ENCODE measurements at regions of chr12 and their contacts with region 1.

Region 1: GRCh38 chr12:47742253-47742825 is 16.3 kb downstream of the RAPGEF3 start:
- DNase-seq: peak; percentile 45 to 83 (median 72)
- ATAC-seq: peak; percentile 57
- H3K4me3 ChIP-seq: no peak overlapping the region
- H3K4me3 Mint-ChIP-seq: no peak overlapping the region
- H3K27ac ChIP-seq: no peak overlapping the region
- H3K27ac Mint-ChIP-seq: no peak overlapping the region
- H3K4me1 ChIP-seq: peaks cover 27% of the 10 kb centered on the region
- H3K4me1 Mint-ChIP-seq: peaks cover 32% of the 10 kb centered on the region
- H3K27me3 ChIP-seq: peaks cover 0 to 4% of the 10 kb centered on the region in 2 experiments
- H3K27me3 Mint-ChIP-seq: peaks cover 5% of the 10 kb centered on the region
- CTCF ChIP-seq: peak; percentile 98

Region 2: GRCh38 chr12:47715393-47715876 is 26.9 kb before region 1 on chr12:
- CTCF ChIA-PET with region 1: interaction called, 172 read pairs
- POLR2A ChIA-PET with region 1: no interaction called
- intact Hi-C with region 1: loop called (anchors 1 to 2 kb)
- DNase-seq: peak; percentile 56 to 88 (median 85)
- ATAC-seq: peak; percentile 85
- H3K4me3 ChIP-seq: no peak overlapping the region
- H3K4me3 Mint-ChIP-seq: no peak overlapping the region
- H3K27ac ChIP-seq: no peak overlapping the region
- H3K27ac Mint-ChIP-seq: no peak overlapping the region
- H3K4me1 ChIP-seq: peaks cover 17% of the 10 kb centered on the region
- H3K4me1 Mint-ChIP-seq: peaks cover 27% of the 10 kb centered on the region
- H3K27me3 ChIP-seq: no peaks in the 10 kb centered on the region
- H3K27me3 Mint-ChIP-seq: no peaks in the 10 kb centered on the region
- CTCF ChIP-seq: peak; percentile 67

Region 3: GRCh38 chr12:47767216-47767724 is 24.9 kb after region 1 on chr12:
- CTCF ChIA-PET with region 1: interaction called, 500 read pairs
- POLR2A ChIA-PET with region 1: interaction called, 16 read pairs
- intact Hi-C with region 1: loop called (anchors 1 to 2 kb)
- DNase-seq: peak; percentile 46 to 83 (median 73)
- ATAC-seq: peak; percentile 76
- H3K4me3 ChIP-seq: no peak overlapping the region
- H3K4me3 Mint-ChIP-seq: no peak overlapping the region
- H3K27ac ChIP-seq: no peak overlapping the region
- H3K27ac Mint-ChIP-seq: no peak overlapping the region
- H3K4me1 ChIP-seq: peaks cover 28% of the 10 kb centered on the region
- H3K4me1 Mint-ChIP-seq: peaks cover 23% of the 10 kb centered on the region
- H3K27me3 ChIP-seq: no peaks in the 10 kb centered on the region
- H3K27me3 Mint-ChIP-seq: no peaks in the 10 kb centered on the region
- CTCF ChIP-seq: peak; percentile 58

Region 4: GRCh38 chr12:47797441-47797840 is 55.1 kb after region 1 on chr12:
- CTCF ChIA-PET with region 1: interaction called, 15 read pairs
- POLR2A ChIA-PET with region 1: no interaction called
- intact Hi-C with region 1: no loop called
- DNase-seq: peak in 6 of 9 experiments; percentile 47 to 73 (median 64)
- ATAC-seq: peak; percentile 90
- H3K4me3 ChIP-seq: no peak overlapping the region
- H3K4me3 Mint-ChIP-seq: no peak overlapping the region
- H3K27ac ChIP-seq: no peak overlapping the region
- H3K27ac Mint-ChIP-seq: peak overlapping the region; percentile 85
- H3K4me1 ChIP-seq: peaks cover 44% of the 10 kb centered on the region
- H3K4me1 Mint-ChIP-seq: peaks cover 36% of the 10 kb centered on the region
- H3K27me3 ChIP-seq: no peaks in the 10 kb centered on the region
- H3K27me3 Mint-ChIP-seq: no peaks in the 10 kb centered on the region
- CTCF ChIP-seq: peak; percentile 35

Region 5: DNA sequence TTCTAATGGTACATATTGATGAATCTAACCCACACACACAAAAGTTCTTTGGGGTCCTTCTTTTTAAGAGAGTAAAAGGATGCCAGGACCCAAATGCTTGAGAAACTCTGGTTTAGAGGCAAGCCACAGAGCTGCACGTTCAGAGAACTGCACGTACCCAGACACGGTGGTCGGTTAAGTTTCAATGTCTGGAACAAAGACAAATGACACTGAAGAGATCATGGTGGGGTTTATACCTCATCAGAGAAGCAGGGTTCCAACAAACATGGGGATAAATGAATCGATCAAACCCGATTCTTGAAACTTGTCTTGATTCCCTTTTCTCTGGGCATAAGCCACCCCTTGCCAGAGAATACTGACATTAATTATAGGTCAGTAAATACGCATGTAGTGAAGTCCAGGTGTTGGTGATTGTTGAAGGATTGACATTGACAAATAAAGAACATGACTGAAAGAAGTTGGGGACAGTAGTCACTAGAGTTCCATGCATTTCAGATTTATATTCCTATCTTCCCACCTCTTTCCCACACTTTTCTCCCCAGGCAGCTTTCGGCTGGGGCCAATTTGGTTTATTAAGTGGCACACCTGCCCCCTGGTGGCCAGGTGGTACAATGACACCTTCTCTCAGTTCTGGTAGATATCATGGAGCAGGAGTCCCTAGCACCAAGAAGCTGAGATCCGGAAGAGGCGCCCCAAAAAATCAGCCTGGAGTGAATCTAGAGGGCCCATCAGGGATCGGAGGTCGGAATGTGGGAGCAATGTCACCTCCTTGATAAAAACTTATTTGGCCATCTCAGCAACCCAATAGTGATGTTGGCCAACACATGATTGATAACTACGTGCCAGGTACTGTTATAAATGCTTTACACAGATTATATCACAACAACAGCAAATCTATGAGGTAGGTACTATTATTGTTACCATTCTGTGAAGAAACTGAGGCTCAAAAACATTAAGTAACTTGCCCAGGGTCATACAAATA is 95.1 kb after region 1 on chr12:
- CTCF ChIA-PET with region 1: interaction called, 469 read pairs
- POLR2A ChIA-PET with region 1: interaction called, 14 read pairs
- intact Hi-C with region 1: loop called (anchors 1 kb)
- DNase-seq: peak; percentile 28 to 84 (median 70)
- ATAC-seq: peak; percentile 46
- H3K4me3 ChIP-seq: no peak overlapping the region
- H3K4me3 Mint-ChIP-seq: no peak overlapping the region
- H3K27ac ChIP-seq: no peak overlapping the region
- H3K27ac Mint-ChIP-seq: peak overlapping the region; percentile 65
- H3K4me1 ChIP-seq: peaks cover 51% of the 10 kb centered on the region
- H3K4me1 Mint-ChIP-seq: peaks cover 54% of the 10 kb centered on the region
- H3K27me3 ChIP-seq: no peaks in the 10 kb centered on the region
- H3K27me3 Mint-ChIP-seq: no peaks in the 10 kb centered on the region
- CTCF ChIP-seq: peak; percentile 86

Measured in CD8-positive, alpha-beta T cell (primary cell).